Gastrocnemius medialis (tissue), 4 donors: ENCODE measurements at regions of chr7 and their contacts with region 1.

Region 1: DNA sequence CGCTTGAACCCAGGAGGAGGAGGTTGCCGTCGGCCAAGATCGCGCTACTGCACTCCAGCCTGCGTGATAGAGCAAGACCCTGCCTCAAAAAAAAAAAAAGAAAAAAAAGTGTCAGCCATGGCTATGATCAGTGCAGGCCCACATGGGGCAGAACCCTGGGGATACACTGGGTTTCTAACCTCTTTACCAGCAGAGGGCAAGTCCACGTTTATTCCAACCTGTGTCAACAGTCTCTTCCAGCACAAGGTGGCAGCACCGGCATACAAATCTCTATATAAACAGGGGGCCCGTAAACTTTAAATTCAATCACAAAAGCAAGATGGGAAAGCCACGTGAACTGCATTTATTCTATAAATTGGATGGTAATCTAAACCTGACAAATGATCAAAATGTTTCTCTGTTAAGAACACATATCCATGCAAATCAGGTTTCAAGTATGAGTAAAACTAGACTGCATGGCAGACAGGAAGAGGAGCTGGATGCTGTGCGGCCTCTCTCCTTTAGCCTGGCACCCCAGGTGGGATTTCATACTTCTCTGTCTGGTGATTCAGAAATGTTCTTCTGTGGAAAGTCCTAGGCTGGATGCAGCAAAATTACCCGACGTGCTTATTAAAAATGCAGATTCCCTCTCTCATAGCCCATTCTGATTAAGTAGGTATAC is 60.0 kb upstream of the STEAP1B start:
- DNase-seq: peak; percentile 50 to 61
- ATAC-seq: peak; percentile 67 to 68
- H3K4me3 ChIP-seq: no peak overlapping the region
- H3K27ac ChIP-seq: no peak overlapping the region
- H3K4me1 ChIP-seq: peaks cover 23 to 38% of the 10 kb centered on the region in 2 donors
- H3K27me3 ChIP-seq: no peaks in the 10 kb centered on the region
- CTCF ChIP-seq: peak; percentile 81 to 90 (median 88)
- POLR2A ChIP-seq: no peak

Region 2: GRCh38 chr7:22607180-22607579 is 47.2 kb after region 1 on chr7:
- in situ Hi-C with region 1: no loop called
- intact Hi-C with region 1: no loop called
- DNase-seq: no peak
- ATAC-seq: no peak
- H3K4me3 ChIP-seq: no peak overlapping the region
- H3K27ac ChIP-seq: no peak overlapping the region
- H3K4me1 ChIP-seq: no peaks in the 10 kb centered on the region
- H3K27me3 ChIP-seq: no peaks in the 10 kb centered on the region
- CTCF ChIP-seq: no peak
- POLR2A ChIP-seq: no peak

Region 3: DNA sequence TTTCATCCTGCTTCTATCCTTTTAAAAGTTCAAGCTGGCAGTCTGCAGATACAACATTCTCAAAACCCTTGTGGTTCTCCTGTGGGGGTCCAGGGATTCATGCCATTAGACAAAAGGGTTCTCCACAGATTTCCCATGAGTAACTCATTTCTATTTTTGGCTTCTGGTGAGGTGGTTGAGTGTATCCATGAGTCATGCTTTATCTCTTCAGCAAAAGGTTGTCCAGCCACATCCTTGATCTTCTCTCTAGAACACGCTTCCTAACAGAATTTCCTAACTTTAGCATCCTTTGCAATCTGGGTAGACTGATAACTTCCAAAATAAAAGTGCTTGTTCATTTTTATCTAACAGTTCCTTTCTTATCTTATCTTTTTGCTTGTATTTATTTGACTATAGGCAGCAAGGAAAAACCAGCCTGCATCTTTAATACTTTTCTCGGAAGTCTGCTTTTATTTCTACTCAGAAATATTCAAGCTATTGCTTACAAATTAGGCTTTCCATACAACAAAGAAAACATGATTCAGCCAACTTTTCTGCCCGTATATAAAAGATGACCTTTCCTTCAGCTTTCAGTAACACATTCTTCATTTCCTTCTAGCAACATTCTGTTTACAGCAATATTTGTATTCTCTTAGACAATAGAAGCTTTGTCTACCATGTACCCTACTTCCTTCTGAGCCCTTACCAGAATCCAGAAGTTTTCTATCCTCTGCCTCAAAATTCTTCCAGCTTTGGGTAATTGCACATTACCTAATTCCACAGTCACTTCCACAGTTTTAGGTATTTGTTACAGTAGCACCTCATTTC is 87.7 kb after region 1 on chr7:
- in situ Hi-C with region 1: no loop called
- intact Hi-C with region 1: no loop called
- DNase-seq: no peak
- ATAC-seq: no peak
- H3K4me3 ChIP-seq: no peak overlapping the region
- H3K27ac ChIP-seq: no peak overlapping the region
- H3K4me1 ChIP-seq: no peaks in the 10 kb centered on the region
- H3K27me3 ChIP-seq: no peaks in the 10 kb centered on the region
- CTCF ChIP-seq: no peak
- POLR2A ChIP-seq: no peak

Region 4: GRCh38 chr7:22726345-22727185 is 166.6 kb after region 1 on chr7:
- in situ Hi-C with region 1: loop called (anchors 5 to 10 kb)
- intact Hi-C with region 1: loop called (anchors 1 kb)
- DNase-seq: peak; percentile 45 to 66
- ATAC-seq: peak; percentile 86
- H3K4me3 ChIP-seq: peak overlapping the region; percentile 35 to 69 (median 40)
- H3K27ac ChIP-seq: peak overlapping the region; percentile 29 to 71 (median 46)
- H3K4me1 ChIP-seq: peaks cover 49 to 55% of the 10 kb centered on the region in 2 donors
- H3K27me3 ChIP-seq: no peaks in the 10 kb centered on the region
- CTCF ChIP-seq: peak; percentile 34 to 59 (median 59)
- POLR2A ChIP-seq: no peak

Region 5: DNA sequence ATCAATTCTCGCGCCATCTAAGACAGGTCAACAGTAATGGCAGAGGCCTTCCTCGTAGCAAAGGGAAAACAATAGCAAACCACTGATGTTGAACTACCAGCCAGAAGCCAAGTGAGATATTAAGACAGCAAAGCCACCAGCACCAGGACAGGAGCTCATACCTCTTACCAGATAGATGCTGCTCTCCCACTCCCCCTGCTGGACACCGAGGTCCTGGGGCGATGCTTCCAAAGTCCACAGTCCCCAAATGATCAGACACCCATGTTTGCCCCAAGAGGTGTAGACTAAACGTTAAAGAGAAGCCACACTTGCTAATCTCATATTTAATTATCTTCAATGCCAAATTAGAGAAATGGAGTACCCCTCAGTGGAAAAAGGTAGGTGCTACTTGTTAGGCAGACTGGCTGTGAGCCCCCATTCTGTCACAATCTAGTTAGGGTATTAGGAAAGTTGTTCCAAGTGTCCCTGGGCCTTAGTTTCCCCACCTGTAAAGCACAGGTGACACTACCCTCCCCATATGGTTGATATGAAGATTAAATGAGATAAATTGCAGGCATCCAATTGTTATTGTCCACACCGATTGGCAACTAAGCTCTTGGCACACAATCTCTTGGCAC is 222.8 kb after region 1 on chr7:
- in situ Hi-C with region 1: no loop called
- intact Hi-C with region 1: loop called (anchors 5 kb)
- DNase-seq: peak; percentile 14 to 28
- ATAC-seq: peak in 1 of 2 donors; percentile 68
- H3K4me3 ChIP-seq: no peak overlapping the region
- H3K27ac ChIP-seq: no peak overlapping the region
- H3K4me1 ChIP-seq: peaks cover 0 to 9% of the 10 kb centered on the region in 2 donors
- H3K27me3 ChIP-seq: no peaks in the 10 kb centered on the region
- CTCF ChIP-seq: peak; percentile 39 to 73 (median 52)
- POLR2A ChIP-seq: no peak

Region 6: GRCh38 chr7:23055582-23056178 is 495.7 kb after region 1 on chr7:
- in situ Hi-C with region 1: loop called (anchors 5 kb)
- intact Hi-C with region 1: loop called (anchors 1 kb)
- DNase-seq: peak; percentile 9 to 24
- ATAC-seq: peak; percentile 88 to 90
- H3K4me3 ChIP-seq: no peak overlapping the region
- H3K27ac ChIP-seq: no peak overlapping the region
- H3K4me1 ChIP-seq: no peaks in the 10 kb centered on the region
- H3K27me3 ChIP-seq: no peaks in the 10 kb centered on the region
- CTCF ChIP-seq: peak; percentile 74 to 95 (median 91)
- POLR2A ChIP-seq: no peak